ENCODE measurements at regions of chr10 and their contacts with region 1.

Region 1: GRCh38 chr10:91908337-91909116 is 759 bp downstream of the FGFBP3 start:
- DNase-seq: peak; percentile 82
- H3K4me3 ChIP-seq: peak overlapping the region; percentile 60 to 85 (median 72)
- H3K27ac ChIP-seq: peak overlapping the region; percentile 65 to 74 (median 70)
- H3K4me1 ChIP-seq: peaks cover 0 to 9% (median 6%) of the 10 kb centered on the region in 4 donors
- H3K27me3 ChIP-seq: no peaks in the 10 kb centered on the region
- CTCF ChIP-seq: peak in 1 of 4 experiments; percentile 9
- EP300 ChIP-seq: no peak
- POLR2A ChIP-seq: no peak

Region 2: DNA sequence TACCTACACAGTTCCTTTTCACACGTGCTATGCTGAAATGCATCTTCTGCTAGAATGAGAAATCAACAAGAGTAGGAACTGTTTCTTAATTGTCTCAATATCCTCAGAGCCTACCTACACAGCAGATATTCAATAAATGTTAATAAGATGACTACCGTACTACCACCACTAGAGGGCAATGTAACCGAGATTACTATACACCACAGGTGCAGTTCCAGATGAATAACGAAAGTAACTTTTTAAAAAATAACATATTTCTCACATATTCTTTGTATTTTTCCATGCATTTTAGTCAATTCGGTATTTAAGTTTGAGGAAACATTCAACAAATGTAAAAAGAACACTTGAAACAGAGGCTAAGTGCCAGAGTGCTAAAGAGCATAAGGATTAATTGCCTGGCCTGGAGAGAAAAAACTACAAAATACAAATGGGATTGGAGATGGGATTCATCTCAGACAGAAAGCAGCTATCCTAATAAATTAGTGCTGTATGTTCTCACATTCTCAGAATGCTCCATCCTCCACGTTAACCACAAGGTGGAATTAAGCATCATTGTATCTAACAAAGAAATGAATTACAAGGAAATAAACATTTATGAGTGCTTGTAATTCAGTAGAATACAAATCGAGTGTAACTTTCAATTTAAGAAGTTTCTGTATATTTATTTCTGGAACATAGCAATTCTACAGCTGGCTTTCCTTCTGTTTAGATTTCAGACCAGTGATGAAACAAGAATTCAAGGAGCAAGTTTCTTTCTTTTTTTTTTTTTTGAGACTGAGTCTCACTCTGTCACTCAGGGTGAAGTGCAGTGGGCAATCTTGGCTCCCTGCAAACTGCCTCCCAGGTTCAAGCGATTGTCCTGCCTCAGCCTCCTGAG is 518.7 kb before region 1 on chr10:
- intact Hi-C with region 1: no loop called
- DNase-seq: no peak
- H3K4me3 ChIP-seq: peak overlapping the region in 3 of 4 donors; percentile 12 to 23 (median 19)
- H3K27ac ChIP-seq: peak overlapping the region; percentile 8 to 63 (median 41)
- H3K4me1 ChIP-seq: peaks cover 0 to 10% (median 4%) of the 10 kb centered on the region in 4 donors
- H3K27me3 ChIP-seq: no peaks in the 10 kb centered on the region
- CTCF ChIP-seq: peak; percentile 24 to 66 (median 58)
- EP300 ChIP-seq: no peak
- POLR2A ChIP-seq: no peak

Region 3: DNA sequence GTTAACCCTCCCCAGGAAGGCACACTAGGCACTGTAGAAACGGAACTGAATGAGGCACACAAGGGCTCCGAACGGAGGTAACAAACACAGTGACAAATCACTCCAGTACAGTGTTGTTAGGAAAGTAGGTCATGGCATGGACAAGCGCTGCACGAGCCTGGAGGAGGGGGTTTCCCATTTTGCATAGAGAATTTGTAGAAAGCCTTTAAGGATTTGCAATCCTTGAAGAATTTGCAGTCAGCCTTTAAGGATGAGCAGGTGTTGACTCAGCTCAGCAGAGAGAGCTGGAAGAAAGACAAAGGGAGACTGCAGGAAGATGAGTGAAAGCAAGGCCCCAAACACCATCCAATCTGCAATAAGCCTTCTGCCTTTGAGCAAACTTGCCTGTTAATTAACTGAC is 224.6 kb before region 1 on chr10:
- intact Hi-C with region 1: no loop called
- DNase-seq: no peak
- H3K4me3 ChIP-seq: no peak overlapping the region
- H3K27ac ChIP-seq: no peak overlapping the region
- H3K4me1 ChIP-seq: no peaks in the 10 kb centered on the region
- H3K27me3 ChIP-seq: no peaks in the 10 kb centered on the region
- CTCF ChIP-seq: no peak
- EP300 ChIP-seq: no peak
- POLR2A ChIP-seq: no peak

Region 4: DNA sequence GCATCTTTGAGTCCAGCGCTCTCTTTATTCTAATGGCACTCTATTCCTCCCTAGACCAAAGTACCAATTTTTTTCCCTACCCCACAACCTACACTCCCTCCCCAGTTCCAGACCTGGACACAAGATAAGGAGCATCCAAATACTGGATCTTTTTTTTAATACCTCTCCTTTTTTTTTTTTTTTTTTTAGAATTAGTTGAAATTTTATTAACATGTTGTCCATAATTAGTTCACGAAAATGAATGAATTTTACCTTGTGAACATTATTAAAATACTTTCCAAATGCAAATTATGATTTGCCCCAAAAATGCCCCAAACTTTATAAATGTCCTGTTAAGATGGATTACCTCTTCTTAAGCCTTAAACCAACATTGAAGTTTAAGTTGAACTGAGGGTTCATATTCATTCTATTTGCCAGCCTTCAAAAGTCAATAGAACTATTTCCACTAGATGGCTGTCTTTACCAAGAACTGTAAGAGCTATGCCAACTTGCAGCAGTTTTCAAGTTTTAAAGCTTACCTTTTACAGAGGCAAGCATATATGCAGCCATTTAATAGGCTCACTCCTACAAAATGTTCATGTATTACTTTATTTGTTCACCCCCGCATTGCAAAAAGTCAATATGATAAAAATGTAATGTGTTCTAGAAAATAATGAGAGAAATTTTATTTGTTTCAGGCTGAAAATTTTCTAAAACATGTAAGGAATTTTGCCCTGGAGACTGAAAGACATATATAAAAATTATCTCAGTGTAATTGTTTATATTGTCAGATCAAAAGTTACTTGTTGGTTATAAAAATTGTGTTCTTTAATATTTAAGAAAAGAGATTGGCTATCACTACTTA is 150.0 kb before region 1 on chr10:
- intact Hi-C with region 1: loop called (anchors 10 kb)
- DNase-seq: no peak
- H3K4me3 ChIP-seq: no peak overlapping the region
- H3K27ac ChIP-seq: no peak overlapping the region
- H3K4me1 ChIP-seq: no peaks in the 10 kb centered on the region
- H3K27me3 ChIP-seq: no peaks in the 10 kb centered on the region
- CTCF ChIP-seq: peak in 2 of 4 experiments; percentile 13 to 45
- EP300 ChIP-seq: no peak
- POLR2A ChIP-seq: no peak

Region 5: DNA sequence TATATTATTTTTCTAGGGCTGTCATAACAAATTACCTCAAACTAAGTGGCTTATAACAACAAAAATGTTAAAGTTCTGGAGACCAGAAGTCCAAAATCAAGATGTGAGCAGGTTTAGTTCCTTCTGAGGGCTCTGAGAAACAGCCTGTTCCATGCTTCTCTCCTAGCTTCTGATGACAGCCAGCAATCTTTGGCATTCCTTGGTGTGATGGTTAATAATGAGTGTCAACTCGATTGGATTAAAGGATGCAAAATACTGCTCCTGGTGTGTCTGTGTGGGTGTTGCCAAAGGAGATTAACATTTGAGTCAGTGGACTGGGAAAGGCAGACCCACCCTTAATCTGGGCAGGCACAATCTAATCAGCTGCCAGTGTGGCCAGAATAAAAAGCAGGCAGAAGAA is 136.6 kb before region 1 on chr10:
- intact Hi-C with region 1: no loop called
- DNase-seq: no peak
- H3K4me3 ChIP-seq: no peak overlapping the region
- H3K27ac ChIP-seq: no peak overlapping the region
- H3K4me1 ChIP-seq: no peaks in the 10 kb centered on the region
- H3K27me3 ChIP-seq: no peaks in the 10 kb centered on the region
- CTCF ChIP-seq: no peak
- EP300 ChIP-seq: no peak
- POLR2A ChIP-seq: no peak

Region 6: DNA sequence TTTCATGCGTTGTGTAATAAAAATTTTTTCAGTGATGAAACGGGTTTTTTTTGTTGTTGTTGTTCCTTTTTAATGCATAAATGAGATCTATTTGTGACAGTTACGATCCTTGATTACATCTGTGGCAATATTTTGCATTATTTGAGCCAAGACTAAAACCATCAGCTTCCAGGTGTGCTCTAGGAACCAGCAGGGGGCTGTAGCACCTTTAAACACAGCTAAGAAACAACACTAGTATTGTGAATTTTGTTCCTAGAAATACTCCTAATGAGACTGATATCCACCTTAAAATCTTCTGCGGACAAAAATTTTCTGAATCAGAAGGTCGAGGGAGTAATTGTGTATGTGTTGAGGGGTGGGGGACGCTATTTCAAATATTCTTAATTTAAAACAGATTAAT is 51.9 kb before region 1 on chr10:
- intact Hi-C with region 1: loop called (anchors 10 kb)
- DNase-seq: no peak
- H3K4me3 ChIP-seq: no peak overlapping the region
- H3K27ac ChIP-seq: no peak overlapping the region
- H3K4me1 ChIP-seq: no peaks in the 10 kb centered on the region
- H3K27me3 ChIP-seq: no peaks in the 10 kb centered on the region
- CTCF ChIP-seq: peak in 1 of 4 experiments; percentile 7
- EP300 ChIP-seq: no peak
- POLR2A ChIP-seq: no peak

Region 7: DNA sequence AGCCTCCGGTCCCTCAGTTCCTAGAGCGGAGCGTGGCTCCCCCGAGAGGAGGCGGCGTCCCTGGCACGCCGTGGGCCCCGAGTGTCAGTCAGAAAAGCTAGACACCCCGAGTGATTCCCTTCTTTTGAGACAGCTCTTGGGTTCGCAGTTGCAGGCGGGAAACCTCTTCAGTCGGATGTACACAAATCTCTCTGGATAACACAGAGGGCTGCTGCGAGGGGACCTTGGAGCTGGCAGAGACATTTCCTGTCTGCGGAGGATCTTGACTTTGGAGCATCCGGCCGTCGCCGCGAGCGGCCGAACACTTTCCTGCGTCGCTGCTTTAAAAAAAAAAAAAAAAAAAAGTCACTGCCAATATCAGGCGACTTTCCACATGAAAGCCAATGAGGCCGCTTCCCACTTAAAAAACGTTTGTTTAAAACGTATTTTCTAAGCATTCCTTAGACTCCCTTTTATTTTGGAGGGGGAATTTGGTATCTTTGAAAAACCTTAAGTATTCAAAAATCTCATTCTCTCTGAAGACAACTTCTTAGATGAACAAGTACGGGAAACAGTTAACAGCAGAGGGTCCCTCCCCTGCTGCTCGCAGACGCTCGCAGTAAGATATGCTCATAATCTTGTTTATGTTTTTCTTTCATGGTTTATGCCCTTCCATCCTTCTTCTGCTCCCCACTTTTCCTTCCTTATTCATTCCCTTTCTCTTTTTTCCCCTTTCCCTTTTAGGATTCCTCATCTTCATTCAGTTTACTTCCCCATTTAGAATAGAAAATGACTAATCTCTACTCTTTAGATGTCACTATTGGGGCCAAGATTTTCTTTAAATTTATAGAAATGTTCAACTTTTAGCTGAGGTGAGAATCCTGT is 791.2 kb after region 1 on chr10:
- intact Hi-C with region 1: no loop called
- DNase-seq: no peak
- H3K4me3 ChIP-seq: peak overlapping the region; percentile 18 to 53 (median 44)
- H3K27ac ChIP-seq: peak overlapping the region; percentile 52 to 83 (median 68)
- H3K4me1 ChIP-seq: peaks cover 0 to 18% (median 6%) of the 10 kb centered on the region in 4 donors
- H3K27me3 ChIP-seq: peaks cover 0 to 14% (median 0%) of the 10 kb centered on the region in 3 donors
- CTCF ChIP-seq: no peak
- EP300 ChIP-seq: no peak
- POLR2A ChIP-seq: no peak

Measured in sigmoid colon (tissue), 7 donors.